ENCODE measurements at regions of chr2 and their contacts with region 1.

Region 1: DNA sequence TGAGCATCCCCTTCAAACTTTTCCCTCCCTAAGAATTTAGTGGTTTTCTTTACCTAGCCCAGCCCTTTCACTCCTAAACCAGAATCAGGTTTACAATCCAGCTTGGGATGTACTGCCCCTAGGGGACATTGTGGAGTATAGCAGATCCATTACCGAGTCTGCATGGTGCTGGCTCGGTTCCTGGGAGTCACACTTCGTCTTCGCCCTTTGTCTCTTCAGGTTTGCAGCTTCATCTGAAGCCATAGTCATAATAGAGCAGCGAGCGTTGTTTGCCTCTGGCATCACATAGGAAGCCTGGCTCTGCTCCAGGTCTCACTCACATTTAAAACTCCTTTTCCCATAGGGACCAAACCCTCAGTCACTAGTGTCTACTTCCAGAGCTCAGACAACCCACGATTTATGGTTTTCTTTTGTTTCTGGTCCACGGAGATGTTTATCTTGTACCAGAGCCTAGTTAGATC is 16.8 kb upstream of the LYPD6 start:
- DNase-seq: peak; percentile 28
- H3K4me3 Mint-ChIP-seq: no peak overlapping the region
- H3K27ac Mint-ChIP-seq: no peak overlapping the region
- H3K4me1 Mint-ChIP-seq: no peaks in the 10 kb centered on the region
- H3K27me3 Mint-ChIP-seq: peaks cover 9% of the 10 kb centered on the region
- CTCF ChIP-seq: peak; percentile 61

Region 2: GRCh38 chr2:148914463-148914862 is 399.1 kb before region 1 on chr2:
- CTCF ChIA-PET with region 1: no interaction called
- intact Hi-C with region 1: no loop called
- DNase-seq: no peak
- H3K4me3 Mint-ChIP-seq: no peak overlapping the region
- H3K27ac Mint-ChIP-seq: no peak overlapping the region
- H3K4me1 Mint-ChIP-seq: no peaks in the 10 kb centered on the region
- H3K27me3 Mint-ChIP-seq: peaks cover 92% of the 10 kb centered on the region
- CTCF ChIP-seq: no peak

Region 3: DNA sequence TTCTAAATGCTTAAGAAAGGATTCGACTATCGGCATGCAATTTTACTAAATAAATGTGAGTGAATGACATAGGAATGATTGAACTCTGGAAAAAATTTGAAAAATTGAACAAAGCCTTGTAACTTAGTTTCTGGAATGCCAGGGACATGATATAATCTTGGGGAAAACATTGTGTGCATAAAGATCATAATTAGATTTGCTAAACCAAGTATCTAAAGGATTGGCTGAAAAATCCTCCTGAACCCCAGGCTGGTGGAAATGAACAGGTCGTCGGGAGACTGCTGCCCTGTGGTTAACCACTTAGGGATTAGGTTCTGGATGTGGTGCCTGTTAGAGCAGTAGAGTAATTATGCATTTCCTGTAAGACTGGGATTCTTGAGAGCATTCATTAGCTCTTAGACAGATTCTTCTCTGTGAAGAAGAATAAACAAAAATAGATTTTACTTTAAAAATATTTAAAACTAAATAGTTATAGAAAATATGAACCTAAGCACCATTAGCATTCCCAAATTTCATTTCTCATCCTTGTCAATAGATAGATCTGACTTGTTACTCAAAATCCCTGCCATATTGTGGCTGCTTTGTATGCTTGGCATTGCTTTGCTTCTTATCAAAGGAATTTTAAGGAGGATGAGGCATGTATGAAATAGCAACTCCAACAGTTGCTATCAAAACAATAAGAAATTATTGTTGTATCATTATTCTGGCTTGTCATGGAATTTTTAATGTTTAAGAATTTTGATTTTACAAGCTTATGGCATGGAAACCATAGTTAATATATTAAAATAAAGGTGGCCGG is 219.1 kb before region 1 on chr2:
- CTCF ChIA-PET with region 1: no interaction called
- intact Hi-C with region 1: loop called (anchors 5 kb)
- DNase-seq: no peak
- H3K4me3 Mint-ChIP-seq: no peak overlapping the region
- H3K27ac Mint-ChIP-seq: no peak overlapping the region
- H3K4me1 Mint-ChIP-seq: peaks cover 10% of the 10 kb centered on the region
- H3K27me3 Mint-ChIP-seq: peaks cover 40% of the 10 kb centered on the region
- CTCF ChIP-seq: no peak

Measured in Calu3 (cell line).